ENCODE measurements at regions of chr4 and their contacts with region 1.

Region 1: GRCh38 chr4:55214172-55214571 is 88.8 kb upstream of the KDR start:
- DNase-seq: no peak

Region 2: GRCh38 chr4:54986095-54986846 is 227.9 kb before region 1 on chr4:
- intact Hi-C with region 1: loop called in 1 of 2 experiments (anchors 10 kb)
- DNase-seq: no peak